ENCODE measurements at regions of chr10 and their contacts with region 1.

Region 1: GRCh38 chr10:15370856-15371701 is at the start of gene FAM171A1:
- DNase-seq: no peak
- H3K4me3 ChIP-seq: peak within 1 kb of the TSS; percentile 75 to 77
- H3K27ac ChIP-seq: peak within 1 kb of the TSS; percentile 72
- H3K4me1 ChIP-seq: peaks cover 17% of the 10 kb centered on the region
- H3K27me3 ChIP-seq: no peaks in the 10 kb centered on the region
- CTCF ChIP-seq: no peak
- POLR2A ChIP-seq: no peak
- total RNA-seq, gene FAM171A1: 8.6 TPM

Region 2: GRCh38 chr10:15209827-15210509 is 161.1 kb before region 1 on chr10:
- intact Hi-C with region 1: loop called (anchors 5 kb)
- DNase-seq: no peak
- H3K4me3 ChIP-seq: no peak overlapping the region
- H3K27ac ChIP-seq: no peak overlapping the region
- H3K4me1 ChIP-seq: no peaks in the 10 kb centered on the region
- H3K27me3 ChIP-seq: no peaks in the 10 kb centered on the region
- CTCF ChIP-seq: peak; percentile 60 to 77 (median 71)
- POLR2A ChIP-seq: no peak

Region 3: DNA sequence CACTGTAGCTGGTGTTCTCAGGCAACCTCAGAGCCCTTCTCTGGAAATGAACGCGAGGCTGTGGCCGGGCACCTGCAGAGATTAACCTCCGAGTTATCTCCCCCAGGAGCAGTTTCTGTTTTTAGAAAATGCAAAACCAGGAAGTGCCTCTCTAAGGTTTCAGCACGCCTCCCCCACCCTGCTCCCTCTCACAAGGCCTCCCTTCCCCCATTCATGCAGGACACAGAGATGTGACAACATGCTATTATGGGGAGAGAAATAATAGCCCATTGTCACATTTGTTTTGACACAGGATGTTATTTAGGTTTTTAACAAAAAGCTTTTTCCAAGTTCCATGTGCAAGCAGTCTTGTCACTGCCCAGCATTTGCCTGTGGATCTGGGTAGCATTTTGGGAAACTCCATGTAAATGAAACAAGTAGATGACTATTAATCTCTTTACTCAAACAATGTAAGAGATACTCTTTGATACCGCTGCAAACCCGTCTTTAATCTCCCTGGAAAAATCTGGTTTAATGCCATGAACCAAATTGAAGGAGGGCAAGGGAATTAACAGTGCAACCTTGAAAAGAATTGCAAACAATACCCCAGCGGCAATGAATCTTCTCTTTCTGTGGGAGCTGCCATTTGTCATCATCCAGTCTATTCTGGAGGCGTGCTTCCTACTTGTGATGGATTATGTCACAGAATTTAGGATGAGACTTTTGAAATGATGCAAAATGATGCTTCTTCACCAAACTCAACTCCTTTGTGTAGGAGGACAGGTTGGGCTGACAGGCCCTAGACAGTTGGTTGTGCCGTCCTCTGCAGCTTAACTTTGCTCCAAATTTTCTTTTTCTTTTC is 116.1 kb before region 1 on chr10:
- intact Hi-C with region 1: loop called (anchors 5 kb)
- DNase-seq: no peak
- H3K4me3 ChIP-seq: no peak overlapping the region
- H3K27ac ChIP-seq: no peak overlapping the region
- H3K4me1 ChIP-seq: no peaks in the 10 kb centered on the region
- H3K27me3 ChIP-seq: no peaks in the 10 kb centered on the region
- CTCF ChIP-seq: no peak
- POLR2A ChIP-seq: no peak

Region 4: DNA sequence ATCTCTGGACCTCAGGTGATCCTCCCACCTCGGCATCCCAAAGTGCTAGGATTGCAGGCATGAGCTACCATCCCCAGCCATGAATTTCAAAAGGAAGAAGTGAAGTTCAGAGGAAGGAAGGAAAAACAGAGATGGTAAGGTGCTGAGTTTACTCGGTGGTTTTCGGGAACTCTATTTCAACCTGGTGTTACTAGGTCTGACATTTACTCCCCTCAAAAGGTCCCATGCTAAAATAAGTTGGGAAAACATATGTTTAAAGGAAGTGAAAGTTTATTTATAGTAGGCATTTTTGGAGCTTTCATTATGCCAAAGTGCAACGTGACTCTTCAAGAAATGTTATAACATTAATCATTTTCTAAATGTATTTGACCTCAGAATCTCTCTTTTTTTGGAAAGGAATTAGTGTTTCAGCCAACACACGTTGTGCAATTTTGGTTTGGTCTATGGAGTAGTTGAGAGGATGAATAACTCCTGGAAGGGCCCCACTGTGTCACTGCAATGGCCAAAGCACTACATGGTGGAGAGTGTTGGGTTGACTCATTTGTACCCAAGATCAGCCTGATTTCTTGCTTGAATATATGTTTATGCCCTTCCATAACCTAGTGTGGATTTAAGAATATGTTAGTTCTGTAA is 114.7 kb after region 1 on chr10:
- intact Hi-C with region 1: no loop called
- DNase-seq: no peak
- H3K4me3 ChIP-seq: no peak overlapping the region
- H3K27ac ChIP-seq: no peak overlapping the region
- H3K4me1 ChIP-seq: peaks cover 9% of the 10 kb centered on the region
- H3K27me3 ChIP-seq: no peaks in the 10 kb centered on the region
- CTCF ChIP-seq: no peak
- POLR2A ChIP-seq: no peak